ENCODE measurements at regions of chr5 and their contacts with region 1.

Region 1: GRCh38 chr5:137176126-137176525 is 323.0 kb downstream of the SPOCK1 start:
- DNase-seq: no peak

Region 2: DNA sequence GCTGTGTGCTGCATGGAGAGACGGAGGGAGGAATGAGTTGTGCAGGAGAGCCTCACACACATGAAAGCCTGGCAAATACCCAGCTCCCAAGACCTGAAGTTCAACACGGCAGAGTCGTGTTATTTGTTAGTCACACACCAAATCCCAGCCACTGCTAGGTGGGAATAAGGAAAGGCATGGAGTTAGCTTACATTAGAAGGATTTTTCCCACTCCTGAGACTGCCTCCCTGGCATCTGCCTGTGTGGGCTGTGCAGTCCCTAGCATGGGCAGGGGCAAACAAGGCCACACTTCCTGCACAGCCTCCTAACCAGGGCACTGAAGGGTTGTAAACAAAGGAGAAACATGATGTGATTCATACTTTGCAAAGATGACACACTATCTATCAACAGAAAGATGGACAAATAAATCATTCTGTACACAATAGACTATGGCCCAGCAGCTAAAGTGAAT is 16.2 kb after region 1 on chr5:
- intact Hi-C with region 1: loop called in 1 of 2 experiments (anchors 1 kb)
- DNase-seq: no peak

Region 3: DNA sequence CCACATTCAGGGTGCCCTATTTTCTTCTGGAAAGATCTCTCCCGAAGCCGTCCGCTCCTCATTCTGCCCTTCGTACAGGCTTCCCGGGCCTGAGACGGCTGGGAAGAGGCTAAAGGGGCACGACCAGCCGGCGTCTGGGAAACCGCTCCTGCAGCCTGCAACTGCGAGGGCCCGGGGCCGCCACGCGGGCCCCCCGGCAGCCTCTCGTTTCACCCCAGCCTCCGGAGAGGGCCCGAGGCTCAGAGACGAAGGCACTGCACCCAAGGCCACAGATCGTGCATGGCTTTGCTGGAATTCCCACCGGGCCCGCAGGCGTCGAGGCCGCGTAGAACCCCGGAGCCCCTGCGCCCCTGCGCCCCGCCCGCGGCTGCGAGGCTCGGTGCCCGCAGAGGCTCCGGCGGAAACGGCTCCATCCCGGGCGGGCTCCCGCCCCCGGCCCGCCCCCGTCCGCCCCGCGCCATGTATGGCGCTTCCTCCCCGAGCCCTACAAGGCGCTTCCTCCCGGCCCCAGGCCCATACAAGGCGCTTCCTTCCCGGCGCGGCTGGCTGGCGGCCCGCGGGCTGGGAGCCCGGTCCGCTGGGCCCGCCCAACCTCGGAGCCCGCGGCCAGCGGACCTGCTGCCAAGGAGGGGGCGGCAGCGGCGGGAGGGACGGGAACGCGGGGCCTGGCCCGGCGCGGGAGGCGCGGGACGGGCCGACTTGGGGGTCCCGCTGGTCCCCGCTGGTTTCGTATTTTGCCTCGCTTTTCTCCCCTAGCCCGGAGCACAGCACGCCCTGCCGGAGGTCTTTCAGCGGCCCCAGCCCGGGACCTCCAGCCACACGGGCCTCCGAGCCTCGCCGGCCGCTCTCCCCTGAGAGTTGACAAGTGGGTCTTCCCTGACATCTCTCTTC is 1315.8 kb after region 1 on chr5:
- intact Hi-C with region 1: no loop called
- DNase-seq: peak; percentile 97

Measured in posterior vena cava (tissue), 2 donors.